ENCODE measurements at regions of chr12 and their contacts with region 1.

Region 1: DNA sequence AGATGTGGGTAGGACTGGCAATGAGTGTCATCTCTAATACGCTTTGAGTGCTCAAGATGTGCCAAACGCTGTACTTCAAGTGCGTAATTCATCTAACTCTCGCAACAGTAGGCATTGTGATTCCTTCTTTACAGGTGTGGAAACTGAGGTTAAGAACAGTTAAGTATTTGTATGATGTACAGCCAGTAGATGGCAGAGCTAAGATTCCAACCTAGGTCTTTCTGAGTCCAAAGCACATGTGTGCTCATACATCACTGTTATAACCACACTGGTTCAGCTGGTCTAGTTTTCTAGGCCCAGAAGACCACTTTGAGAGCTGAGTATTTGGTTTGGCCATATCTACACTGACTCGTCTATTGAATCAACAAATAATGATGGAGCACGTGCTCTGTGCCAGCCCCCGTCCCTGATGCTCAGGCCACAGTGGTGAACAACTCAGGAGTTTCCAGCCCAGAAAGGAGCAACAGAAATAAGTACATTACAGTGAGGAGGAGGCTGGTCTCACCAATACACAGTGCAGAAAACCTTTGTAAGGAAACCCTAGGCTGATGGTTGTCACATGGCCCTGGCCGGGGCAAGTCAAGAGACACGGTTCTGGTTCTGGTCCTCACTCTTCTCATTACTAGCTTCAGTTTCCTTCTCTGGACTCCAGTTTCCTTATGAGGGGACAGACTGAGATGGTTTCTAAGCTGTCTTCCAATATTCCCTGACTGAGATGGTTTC is 69.3 kb upstream of the SCN8A start:
- DNase-seq: no peak
- H3K4me3 ChIP-seq: no peak overlapping the region
- H3K27me3 ChIP-seq: no peaks in the 10 kb centered on the region
- CTCF ChIP-seq: peak; percentile 16; the same call in 1 of the 2 replicates

Region 2: GRCh38 chr12:51531978-51532497 is 10.3 kb after region 1 on chr12:
- CTCF ChIA-PET with region 1: interaction called, 51 read pairs
- POLR2A ChIA-PET with region 1: no interaction called
- DNase-seq: no peak
- H3K4me3 ChIP-seq: no peak overlapping the region
- H3K27me3 ChIP-seq: no peaks in the 10 kb centered on the region
- CTCF ChIP-seq: peak; percentile 96

Measured in BJ (cell line).